ENCODE measurements at regions of chr3 and their contacts with region 1.

Region 1: DNA sequence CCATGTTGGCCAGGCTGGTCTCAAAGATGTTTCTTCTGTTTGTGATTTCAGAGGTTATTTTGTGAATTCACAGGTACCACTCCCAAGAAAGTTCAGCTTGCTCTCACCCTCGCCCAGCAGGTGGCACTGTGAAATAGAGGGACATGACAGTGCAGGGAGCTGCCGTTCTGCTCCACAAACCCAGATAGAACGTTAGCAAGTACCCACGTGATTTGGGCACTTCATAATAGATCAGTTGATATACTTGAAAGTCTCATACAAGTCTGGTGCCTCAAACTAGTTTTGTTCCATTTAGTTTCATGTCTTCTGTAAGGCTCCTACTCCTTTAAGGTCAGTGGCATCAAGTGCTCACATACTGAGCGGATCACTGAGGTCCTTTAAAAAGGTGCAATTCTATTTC is 45.5 kb downstream of the FILIP1L start:
- DNase-seq: peak; percentile 47
- ATAC-seq: peak; percentile 100
- H3K4me3 ChIP-seq: no peak overlapping the region
- H3K27ac ChIP-seq: no peak overlapping the region
- H3K4me1 ChIP-seq: peaks cover 0 to 3% of the 10 kb centered on the region in 2 experiments; a peak in 1 of 4 replicates
- H3K27me3 ChIP-seq: no peaks in the 10 kb centered on the region
- CTCF ChIP-seq: peak; percentile 33 to 84 (median 77); a peak in 5 of 6 replicates
- POLR2A ChIP-seq: no peak
- RAD21 ChIP-seq: peak; percentile 70

Region 2: GRCh38 chr3:99614768-99615167 is 454.1 kb before region 1 on chr3:
- CTCF ChIA-PET with region 1: no interaction called
- POLR2A ChIA-PET with region 1: no interaction called
- RAD21 ChIA-PET with region 1: no interaction called
- intact Hi-C with region 1: no loop called
- DNase-seq: no peak
- ATAC-seq: no peak
- H3K4me3 ChIP-seq: no peak overlapping the region
- H3K27ac ChIP-seq: no peak overlapping the region
- H3K4me1 ChIP-seq: no peaks in the 10 kb centered on the region
- H3K27me3 ChIP-seq: peaks cover 32% of the 10 kb centered on the region
- CTCF ChIP-seq: no peak
- POLR2A ChIP-seq: no peak
- RAD21 ChIP-seq: no peak

Region 3: DNA sequence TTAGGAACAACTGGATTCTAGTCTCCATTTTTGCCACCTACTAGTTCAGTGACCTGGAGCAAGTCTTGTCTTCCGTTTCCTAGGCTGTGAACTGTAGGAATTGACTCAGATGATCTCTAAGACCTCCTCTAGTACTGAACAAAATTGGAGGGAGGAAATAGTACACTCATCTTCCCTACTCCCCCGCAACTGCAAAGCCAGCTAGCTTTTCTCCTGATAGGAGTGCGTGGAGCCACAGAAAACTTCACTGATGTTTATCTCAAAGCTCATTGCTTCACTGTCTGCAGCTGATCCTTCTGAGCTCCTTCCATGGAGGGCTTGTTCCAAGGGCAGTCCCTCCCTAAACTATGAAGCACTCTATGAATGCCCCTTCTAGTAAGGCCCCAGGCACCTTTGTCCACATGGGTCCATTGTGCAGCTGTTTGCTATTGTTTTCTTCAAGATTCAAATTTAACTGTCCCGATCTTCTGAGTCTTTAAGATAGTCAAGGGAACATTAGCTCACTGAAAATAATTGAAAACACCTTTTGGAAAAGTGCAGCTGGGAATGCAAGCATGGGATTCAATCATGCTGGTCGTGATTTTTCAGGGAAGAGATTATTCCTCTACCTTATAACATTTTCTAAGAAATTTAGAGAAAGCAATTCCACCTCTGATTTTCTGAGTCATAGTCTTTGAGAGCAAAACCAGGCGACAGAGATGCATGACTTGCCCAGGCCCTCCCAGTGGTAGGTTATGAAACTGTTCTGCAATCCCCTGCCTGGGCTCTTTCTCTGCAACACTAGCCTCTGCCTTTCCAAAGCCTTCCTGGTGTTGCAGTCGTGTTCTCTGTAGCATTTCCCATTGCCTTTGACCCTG is 21.2 kb after region 1 on chr3:
- CTCF ChIA-PET with region 1: interaction called, 11 read pairs
- POLR2A ChIA-PET with region 1: no interaction called
- RAD21 ChIA-PET with region 1: no interaction called
- intact Hi-C with region 1: no loop called
- DNase-seq: peak; percentile 16
- ATAC-seq: peak; percentile 98
- H3K4me3 ChIP-seq: no peak overlapping the region
- H3K27ac ChIP-seq: no peak overlapping the region
- H3K4me1 ChIP-seq: no peaks in the 10 kb centered on the region
- H3K27me3 ChIP-seq: no peaks in the 10 kb centered on the region
- CTCF ChIP-seq: peak in 2 of 3 experiments; percentile 52 to 60; a peak in 4 of 6 replicates
- POLR2A ChIP-seq: no peak
- RAD21 ChIP-seq: peak; percentile 12; the same call in 1 of the 2 replicates

Region 4: GRCh38 chr3:100316641-100317069 is 247.8 kb after region 1 on chr3:
- CTCF ChIA-PET with region 1: no interaction called
- POLR2A ChIA-PET with region 1: no interaction called
- RAD21 ChIA-PET with region 1: no interaction called
- intact Hi-C with region 1: no loop called
- DNase-seq: peak; percentile 46
- ATAC-seq: peak; percentile 86
- H3K4me3 ChIP-seq: no peak overlapping the region
- H3K27ac ChIP-seq: no peak overlapping the region
- H3K4me1 ChIP-seq: peaks cover 3 to 4% of the 10 kb centered on the region in 2 experiments; a peak in 2 of 4 replicates
- H3K27me3 ChIP-seq: no peaks in the 10 kb centered on the region
- CTCF ChIP-seq: peak; percentile 32 to 71 (median 65); a peak in 5 of 6 replicates
- POLR2A ChIP-seq: no peak
- RAD21 ChIP-seq: peak; percentile 73